Adrenal gland (tissue), 19 donors: ENCODE measurements at regions of chr3 and their contacts with region 1.

Region 1: GRCh38 chr3:194472290-194472920 is 14.4 kb downstream of the ATP13A3 start:
- DNase-seq: peak in 2 of 7 donors; percentile 40 to 58
- H3K4me3 ChIP-seq: no peak overlapping the region
- H3K27ac ChIP-seq: peak overlapping the region in 1 of 5 donors; percentile 1
- H3K4me1 ChIP-seq: peaks cover 7 to 49% of the 10 kb centered on the region in 2 donors
- H3K27me3 ChIP-seq: no peaks in the 10 kb centered on the region
- CTCF ChIP-seq: peak; percentile 93 to 99 (median 96)
- POLR2A ChIP-seq: no peak

Region 2: GRCh38 chr3:194422188-194422587 is 50.2 kb before region 1 on chr3:
- intact Hi-C with region 1: no loop called
- DNase-seq: no peak
- H3K4me3 ChIP-seq: no peak overlapping the region
- H3K27ac ChIP-seq: no peak overlapping the region
- H3K4me1 ChIP-seq: peaks cover 7 to 9% of the 10 kb centered on the region in 2 donors
- H3K27me3 ChIP-seq: no peaks in the 10 kb centered on the region
- CTCF ChIP-seq: no peak
- POLR2A ChIP-seq: no peak

Region 3: DNA sequence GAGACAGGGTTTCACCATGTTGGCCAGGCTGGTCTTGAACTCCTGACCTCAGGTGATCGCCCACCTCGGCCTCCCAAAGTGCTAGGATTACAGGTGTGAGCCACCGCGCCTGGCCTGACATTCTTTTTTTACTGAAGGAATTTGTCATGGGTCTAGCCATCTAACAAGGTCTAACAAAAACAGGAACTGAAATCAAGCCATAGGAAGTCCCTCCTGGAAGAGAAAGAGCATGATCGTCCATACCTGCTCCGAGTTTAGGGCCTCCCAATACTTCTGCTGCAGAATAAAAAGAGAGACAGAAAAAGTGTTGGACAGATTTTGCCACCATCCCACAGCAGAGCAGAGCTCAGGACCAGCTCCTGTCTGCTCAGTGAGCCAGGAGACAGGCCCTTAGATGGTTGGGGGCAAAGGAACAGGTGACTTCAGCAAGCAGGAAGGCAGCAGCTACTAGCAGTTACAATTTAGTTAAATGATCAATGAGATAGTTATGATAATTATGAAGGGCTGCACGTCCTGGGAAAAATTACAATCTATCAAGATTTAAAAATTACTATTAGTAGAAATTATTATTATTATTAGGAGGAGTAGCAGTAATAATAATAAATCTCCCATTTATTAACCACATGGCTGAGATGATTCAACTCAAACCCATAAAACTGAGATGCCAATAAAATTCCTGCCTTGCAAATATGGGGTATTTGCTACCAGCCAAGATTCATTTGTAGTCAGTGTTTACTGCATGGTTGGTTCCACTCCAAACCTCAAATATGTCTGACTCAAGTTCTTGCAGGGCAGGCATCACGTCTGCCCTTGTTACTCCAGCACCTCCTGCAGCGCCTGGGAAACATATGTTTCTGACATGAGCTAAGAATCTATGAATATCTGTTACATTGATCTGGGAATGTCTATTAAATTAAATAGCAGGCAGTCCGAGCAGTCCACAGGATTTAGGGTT is 120.7 kb after region 1 on chr3:
- intact Hi-C with region 1: loop called (anchors 5 kb)
- DNase-seq: peak in 1 of 7 donors; percentile 30
- H3K4me3 ChIP-seq: no peak overlapping the region
- H3K27ac ChIP-seq: no peak overlapping the region
- H3K4me1 ChIP-seq: no peaks in the 10 kb centered on the region
- H3K27me3 ChIP-seq: no peaks in the 10 kb centered on the region
- CTCF ChIP-seq: no peak
- POLR2A ChIP-seq: no peak

Region 4: DNA sequence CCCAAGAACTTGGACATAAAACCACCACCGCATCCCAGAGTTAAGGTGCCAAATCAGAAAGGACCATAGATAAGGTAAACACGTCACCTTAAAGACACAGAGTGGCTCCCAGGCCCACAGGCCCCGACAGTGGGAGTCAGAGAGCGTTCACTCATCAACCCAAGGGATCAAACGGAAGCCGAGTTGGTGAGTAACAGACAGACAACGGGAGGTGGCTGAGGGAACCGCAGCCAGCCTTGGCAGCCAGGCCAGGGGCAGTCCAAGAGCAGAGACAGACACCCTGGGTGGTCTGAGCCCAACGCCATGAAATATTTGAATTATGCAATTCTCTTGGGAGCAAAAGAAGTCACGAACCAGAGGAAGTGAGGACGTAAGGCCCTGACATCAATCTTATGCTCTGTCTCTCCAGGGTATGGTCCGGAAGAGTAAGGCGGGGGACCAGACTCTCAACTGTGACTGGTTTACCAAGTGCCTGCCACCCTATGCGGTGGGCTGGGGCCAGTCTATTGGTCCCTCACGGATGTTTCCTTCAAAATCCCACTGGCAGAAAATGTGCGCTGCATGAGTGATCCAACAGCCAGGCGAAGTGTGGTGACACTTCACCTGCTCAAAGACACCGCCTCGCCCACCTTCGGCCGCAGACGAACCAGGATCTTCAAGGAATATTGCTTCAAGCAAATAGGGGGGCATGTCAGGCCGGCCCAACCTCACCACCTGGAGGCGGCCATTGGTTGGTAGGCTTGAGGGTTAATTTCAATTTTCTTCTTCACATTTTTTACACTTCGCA is 126.6 kb after region 1 on chr3:
- intact Hi-C with region 1: loop called (anchors 5 kb)
- DNase-seq: peak in 2 of 7 donors; percentile 19 to 40
- H3K4me3 ChIP-seq: no peak overlapping the region
- H3K27ac ChIP-seq: peak overlapping the region in 1 of 5 donors; percentile 34
- H3K4me1 ChIP-seq: no peaks in the 10 kb centered on the region
- H3K27me3 ChIP-seq: no peaks in the 10 kb centered on the region
- CTCF ChIP-seq: no peak
- POLR2A ChIP-seq: no peak